ENCODE measurements at regions of chr1 and their contacts with region 1.

Region 1: GRCh38 chr1:33055210-33056008 is 18.7 kb upstream of the AK2 start:
- DNase-seq: peak; percentile 77
- H3K4me3 ChIP-seq: no peak overlapping the region
- H3K27ac ChIP-seq: peak overlapping the region; percentile 75 to 82 (median 79)
- H3K4me1 ChIP-seq: peaks cover 6 to 26% (median 19%) of the 10 kb centered on the region in 4 donors
- H3K27me3 ChIP-seq: no peaks in the 10 kb centered on the region
- CTCF ChIP-seq: peak; percentile 61 to 88 (median 72)
- EP300 ChIP-seq: no peak
- POLR2A ChIP-seq: no peak

Region 2: GRCh38 chr1:32925403-32926162 is 129.8 kb before region 1 on chr1:
- in situ Hi-C with region 1: loop called in 3 of 4 experiments (anchors 5 to 25 kb)
- intact Hi-C with region 1: loop called (anchors 5 kb)
- DNase-seq: peak; percentile 45
- H3K4me3 ChIP-seq: peak overlapping the region in 1 of 4 donors; percentile 42
- H3K27ac ChIP-seq: peak overlapping the region; percentile 24 to 77 (median 52)
- H3K4me1 ChIP-seq: peaks cover 0 to 18% (median 15%) of the 10 kb centered on the region in 4 donors
- H3K27me3 ChIP-seq: peaks cover 29% of the 10 kb centered on the region
- CTCF ChIP-seq: no peak
- EP300 ChIP-seq: no peak
- POLR2A ChIP-seq: no peak

Region 3: DNA sequence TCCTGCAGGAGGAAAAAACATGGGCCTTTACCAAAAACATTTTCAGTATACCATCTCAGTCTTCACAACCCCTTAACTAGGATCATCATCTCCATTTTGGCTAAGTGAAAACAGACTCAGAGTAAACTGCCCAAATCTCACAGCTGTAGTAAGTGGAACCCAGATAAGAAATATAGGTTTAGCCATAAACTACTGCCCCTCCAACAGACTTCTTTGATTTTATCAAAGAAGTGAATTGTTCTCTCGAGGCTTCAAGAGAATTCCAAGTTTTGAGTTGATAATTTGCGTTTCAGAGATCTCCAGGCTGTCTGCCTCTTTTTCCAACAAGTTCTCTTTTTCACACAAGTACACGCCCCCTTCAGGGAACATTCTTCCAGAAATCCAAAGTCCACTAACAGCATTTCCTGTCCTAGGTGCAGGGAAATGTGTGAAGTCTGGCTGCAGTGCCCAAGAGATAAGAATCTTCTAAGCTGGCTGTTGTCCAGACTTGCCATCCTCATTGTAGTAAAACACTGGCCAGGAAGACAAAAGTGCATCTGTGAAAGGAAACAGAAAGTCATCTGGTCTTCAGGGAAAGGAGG is 121.6 kb before region 1 on chr1:
- in situ Hi-C with region 1: loop called in 3 of 4 experiments (anchors 5 to 25 kb)
- intact Hi-C with region 1: loop called (anchors 5 kb)
- DNase-seq: peak; percentile 77
- H3K4me3 ChIP-seq: no peak overlapping the region
- H3K27ac ChIP-seq: peak overlapping the region; percentile 82 to 89 (median 85)
- H3K4me1 ChIP-seq: peaks cover 6 to 50% (median 34%) of the 10 kb centered on the region in 4 donors
- H3K27me3 ChIP-seq: no peaks in the 10 kb centered on the region
- CTCF ChIP-seq: peak in 2 of 5 experiments; percentile 38 to 58
- EP300 ChIP-seq: peak; percentile 69
- POLR2A ChIP-seq: no peak

Region 4: DNA sequence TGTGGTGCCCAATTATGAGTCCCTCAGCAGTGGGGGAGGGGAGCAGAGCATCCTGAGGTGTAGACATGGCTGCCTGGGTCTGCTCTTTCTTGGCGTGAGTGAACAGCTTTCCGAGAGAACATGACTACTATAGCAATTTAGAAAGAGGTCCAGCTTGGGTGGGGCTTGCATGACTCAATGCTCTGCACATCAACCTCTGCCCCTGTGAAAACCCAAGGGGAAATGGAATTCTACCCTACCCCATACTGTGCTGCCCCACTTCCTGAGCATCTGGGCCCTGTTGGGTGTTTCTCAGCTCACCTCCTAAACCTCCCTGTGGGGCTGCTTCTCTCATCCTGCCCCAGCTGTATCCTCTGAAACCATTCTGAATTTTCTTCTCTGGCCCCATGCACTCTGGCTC is 17.3 kb after region 1 on chr1:
- in situ Hi-C with region 1: no loop called
- intact Hi-C with region 1: no loop called
- DNase-seq: no peak
- H3K4me3 ChIP-seq: no peak overlapping the region
- H3K27ac ChIP-seq: no peak overlapping the region
- H3K4me1 ChIP-seq: no peaks in the 10 kb centered on the region
- H3K27me3 ChIP-seq: no peaks in the 10 kb centered on the region
- CTCF ChIP-seq: no peak
- EP300 ChIP-seq: no peak
- POLR2A ChIP-seq: no peak

Measured in transverse colon (tissue), 4 donors.